ENCODE measurements at regions of chr3 and their contacts with region 1.

Region 1: DNA sequence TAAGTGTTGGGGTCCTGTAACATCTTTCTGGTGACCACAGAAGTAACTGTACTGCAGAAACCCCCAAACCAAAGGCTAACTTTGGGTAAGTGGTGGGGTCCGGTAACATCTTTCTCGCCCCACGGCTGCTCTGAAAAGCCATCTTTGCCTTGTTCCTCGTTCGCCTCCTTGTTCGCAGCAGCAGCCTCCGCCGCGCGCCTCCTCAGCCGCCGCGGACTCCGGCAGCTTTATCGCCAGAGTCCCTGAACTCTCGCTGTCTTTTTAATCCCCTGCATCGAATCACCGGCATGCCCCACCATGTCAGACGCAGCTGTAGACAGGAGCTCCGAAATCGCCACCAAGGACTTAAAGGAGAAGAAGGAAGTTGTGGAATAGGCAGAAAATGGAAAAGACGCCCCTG is 316.8 kb downstream of the TUSC7 start:
- DNase-seq: no peak
- H3K4me3 ChIP-seq: no peak overlapping the region
- H3K27ac ChIP-seq: no peak overlapping the region
- H3K27me3 ChIP-seq: no peaks in the 10 kb centered on the region
- CTCF ChIP-seq: no peak

Region 2: GRCh38 chr3:117355566-117355965 is 329.2 kb after region 1 on chr3:
- intact Hi-C with region 1: loop called in 1 of 2 experiments (anchors 10 kb)
- DNase-seq: peak in 3 of 10 donors; percentile 3 to 32 (median 23)
- H3K4me3 ChIP-seq: no peak overlapping the region
- H3K27ac ChIP-seq: no peak overlapping the region
- H3K27me3 ChIP-seq: no peaks in the 10 kb centered on the region
- CTCF ChIP-seq: peak in 54 of 56 donors; percentile 35 to 83 (median 59)

Region 3: DNA sequence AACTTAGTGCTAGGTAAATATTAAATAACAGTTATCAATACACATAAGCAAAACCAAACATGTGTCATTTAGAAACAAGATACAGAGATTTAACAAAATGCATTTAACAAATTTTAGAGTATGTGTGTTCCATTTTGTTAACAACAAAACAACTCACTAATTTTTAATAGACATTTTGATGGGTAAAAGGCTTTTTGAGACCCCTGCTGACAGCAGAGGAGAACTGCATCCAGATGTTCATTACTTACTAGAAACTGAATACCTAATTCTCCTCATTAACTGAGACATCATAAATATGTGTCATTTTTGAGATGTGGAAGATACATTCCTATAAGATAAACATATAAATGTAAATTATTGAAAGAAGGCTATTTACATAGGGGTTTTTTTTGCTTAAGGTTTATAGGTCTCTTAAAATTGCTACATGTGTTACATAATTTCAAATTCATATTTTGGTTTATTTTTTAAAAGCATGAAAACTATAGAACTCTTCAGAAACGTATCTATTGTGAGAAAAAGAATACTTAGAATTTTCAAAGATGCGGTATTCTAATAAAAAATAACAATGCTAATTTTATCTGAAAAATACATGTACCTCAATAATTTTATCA is 693.0 kb after region 1 on chr3:
- intact Hi-C with region 1: loop called in 1 of 2 experiments (anchors 10 kb)
- DNase-seq: no peak
- H3K4me3 ChIP-seq: no peak overlapping the region
- H3K27ac ChIP-seq: no peak overlapping the region
- H3K27me3 ChIP-seq: no peaks in the 10 kb centered on the region
- CTCF ChIP-seq: peak; percentile 61 to 90 (median 76)

Measured in dorsolateral prefrontal cortex (tissue), 120 donors.